ENCODE measurements at regions of chr22 and their contacts with region 1.

Region 1: DNA sequence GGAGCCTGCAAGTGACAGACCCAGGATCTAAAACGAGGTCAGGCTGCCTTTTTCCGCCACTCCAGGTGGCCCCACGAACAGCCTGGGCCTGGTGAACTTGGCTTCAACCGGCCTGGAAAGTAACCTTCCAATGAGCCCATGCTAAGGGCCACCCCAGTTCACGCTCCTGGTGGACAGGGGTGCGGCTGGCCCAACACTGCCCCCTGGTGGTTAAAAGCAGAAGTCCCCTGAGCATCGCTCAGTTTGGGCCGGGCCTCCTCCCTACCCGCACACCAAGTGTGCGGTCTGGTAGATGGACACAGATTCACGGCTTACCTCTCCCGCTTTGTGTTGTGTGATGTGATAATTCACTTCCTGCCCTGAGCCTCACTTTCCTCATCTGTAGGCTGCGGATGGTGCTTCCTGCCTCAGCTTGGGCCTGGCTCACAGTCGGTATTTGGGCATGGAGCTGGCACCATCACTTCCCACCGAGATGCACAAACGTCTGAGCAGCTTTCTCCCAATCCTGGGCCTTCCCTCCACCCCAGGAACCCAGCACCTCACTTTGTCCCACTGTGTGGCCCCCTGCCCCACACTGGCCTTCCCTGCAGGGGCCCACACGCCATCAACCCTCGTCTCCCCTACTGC is 13.7 kb upstream of the SEC14L3 start:
- DNase-seq: peak; percentile 77 to 92 (median 90)
- ATAC-seq: peak; percentile 99
- H3K4me3 ChIP-seq: no peak overlapping the region
- H3K27ac ChIP-seq: no peak overlapping the region
- H3K4me1 ChIP-seq: peaks cover under 1 to 8% of the 10 kb centered on the region in 2 experiments; a peak in 4 of 5 replicates
- H3K27me3 ChIP-seq: 0 out of 5 replicates have a peak, but pooled peaks cover 0 to 11% of the 10 kb centered on the region in 2 experiments
- CTCF ChIP-seq: peak; percentile 84 to 91 (median 87)
- EP300 ChIP-seq: no peak
- POLR2A ChIP-seq: no peak
- RAD21 ChIP-seq: peak; percentile 76 to 90

Region 2: GRCh38 chr22:30116362-30117117 is 368.9 kb before region 1 on chr22:
- CTCF ChIA-PET with region 1: no interaction called
- POLR2A ChIA-PET with region 1: no interaction called
- in situ Hi-C with region 1: loop called (anchors 25 kb)
- intact Hi-C with region 1: no loop called
- DNase-seq: no peak
- ATAC-seq: no peak
- H3K4me3 ChIP-seq: no peak overlapping the region
- H3K27ac ChIP-seq: no peak overlapping the region
- H3K4me1 ChIP-seq: no peaks in the 10 kb centered on the region
- H3K27me3 ChIP-seq: peaks cover 0 to 6% of the 10 kb centered on the region in 2 experiments; a peak in 2 of 5 replicates
- CTCF ChIP-seq: no peak
- EP300 ChIP-seq: no peak
- POLR2A ChIP-seq: no peak
- RAD21 ChIP-seq: no peak

Region 3: GRCh38 chr22:30282616-30283081 is 202.8 kb before region 1 on chr22:
- CTCF ChIA-PET with region 1: interaction called, 3 read pairs
- POLR2A ChIA-PET with region 1: no interaction called
- in situ Hi-C with region 1: loop called (anchors 5 kb)
- intact Hi-C with region 1: no loop called
- DNase-seq: no peak
- ATAC-seq: no peak
- H3K4me3 ChIP-seq: no peak overlapping the region
- H3K27ac ChIP-seq: no peak overlapping the region
- H3K4me1 ChIP-seq: peaks cover 2 to 54% of the 10 kb centered on the region in 2 experiments; a peak in 4 of 5 replicates
- H3K27me3 ChIP-seq: no peaks in the 10 kb centered on the region; a peak in 1 of 5 replicates
- CTCF ChIP-seq: no peak
- EP300 ChIP-seq: no peak
- POLR2A ChIP-seq: no peak
- RAD21 ChIP-seq: no peak

Region 4: DNA sequence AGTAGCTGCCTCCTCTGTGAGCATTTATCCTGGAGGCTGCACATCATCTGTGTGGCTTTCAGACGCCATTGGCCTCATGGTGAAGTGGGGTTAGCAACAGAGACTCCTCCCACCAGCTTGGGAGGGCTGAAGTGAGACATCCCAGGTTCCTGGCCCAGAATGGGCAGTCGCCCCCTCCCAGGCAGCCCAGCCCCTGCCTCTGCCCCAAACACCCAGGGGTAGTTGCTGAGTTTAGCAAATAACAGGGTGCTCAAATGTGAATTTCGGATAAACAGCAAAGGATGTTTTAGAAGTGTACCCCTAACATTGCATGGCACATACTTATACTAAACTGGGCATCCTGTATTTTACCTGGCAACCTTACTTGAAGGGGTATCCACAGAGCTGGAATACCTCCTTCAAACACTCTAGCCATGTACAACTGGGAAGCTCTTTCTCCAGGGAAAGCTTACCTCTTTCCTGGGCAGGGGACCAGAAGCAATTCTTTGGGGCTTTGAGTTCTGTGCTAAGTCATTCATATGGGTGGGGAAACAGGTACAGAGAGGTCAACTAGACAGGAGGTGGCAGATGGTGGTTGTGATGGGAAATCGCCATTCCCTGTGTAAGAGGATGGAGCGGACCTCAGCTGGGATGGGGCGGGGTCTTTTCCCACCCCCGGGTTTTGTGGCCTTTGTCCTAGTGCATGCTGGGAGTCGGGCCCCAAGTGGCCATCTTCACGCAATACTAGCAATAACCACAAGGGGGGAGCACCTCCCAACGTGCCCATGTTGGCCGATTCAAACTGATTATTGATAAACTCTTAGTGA is 40.6 kb before region 1 on chr22:
- CTCF ChIA-PET with region 1: interaction called, 4 read pairs
- POLR2A ChIA-PET with region 1: no interaction called
- in situ Hi-C with region 1: no loop called
- intact Hi-C with region 1: loop called (anchors 1 kb)
- DNase-seq: peak; percentile 77 to 84 (median 80)
- ATAC-seq: peak; percentile 86
- H3K4me3 ChIP-seq: no peak overlapping the region
- H3K27ac ChIP-seq: peak overlapping the region; percentile 55
- H3K4me1 ChIP-seq: peaks cover 32 to 33% of the 10 kb centered on the region in 2 experiments; a peak in 4 of 5 replicates
- H3K27me3 ChIP-seq: no peaks in the 10 kb centered on the region
- CTCF ChIP-seq: peak; percentile 79 to 84 (median 83)
- EP300 ChIP-seq: no peak
- POLR2A ChIP-seq: peak; percentile 81
- RAD21 ChIP-seq: peak; percentile 40 to 72

Measured in K562 (cell line).